ENCODE measurements at regions of chr15 and their contacts with region 1.

Region 1: DNA sequence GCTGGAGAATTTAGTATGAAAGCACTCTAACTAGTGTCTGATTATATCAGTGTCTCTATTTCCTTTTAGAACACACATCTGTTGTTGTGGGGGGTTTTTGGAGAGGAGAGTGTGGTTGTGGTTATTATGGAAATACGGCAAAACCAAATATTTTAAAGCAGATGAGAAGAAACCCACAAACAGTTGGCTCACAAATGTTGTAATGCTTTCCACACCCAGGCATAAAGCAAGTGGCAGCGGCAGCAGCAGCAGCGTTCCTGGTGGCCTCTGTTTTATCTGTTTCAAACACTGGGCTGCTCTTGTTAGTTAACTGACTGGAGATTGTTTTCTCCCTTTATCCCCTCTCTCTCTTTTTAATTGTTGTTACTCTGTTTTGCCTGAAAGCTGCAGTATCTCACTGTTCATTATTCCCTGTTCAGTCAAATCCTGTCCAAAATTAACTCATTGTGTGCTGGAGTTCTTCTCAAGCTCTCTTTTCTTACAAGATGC is 1045.5 kb upstream of the NR2F2 start:
- DNase-seq: peak; percentile 86
- H3K4me3 Mint-ChIP-seq: peak overlapping the region; percentile 50
- H3K27ac Mint-ChIP-seq: peak overlapping the region; percentile 73
- H3K4me1 Mint-ChIP-seq: peaks cover 52% of the 10 kb centered on the region
- H3K27me3 Mint-ChIP-seq: peaks cover 35% of the 10 kb centered on the region

Region 2: GRCh38 chr15:94582369-94582768 is 702.6 kb before region 1 on chr15:
- intact Hi-C with region 1: loop called (anchors 2 kb)
- DNase-seq: peak; percentile 86
- H3K4me3 Mint-ChIP-seq: no peak overlapping the region
- H3K27ac Mint-ChIP-seq: no peak overlapping the region
- H3K4me1 Mint-ChIP-seq: peaks cover 44% of the 10 kb centered on the region
- H3K27me3 Mint-ChIP-seq: peaks cover 75% of the 10 kb centered on the region

Region 3: GRCh38 chr15:95446854-95447253 is 161.9 kb after region 1 on chr15:
- intact Hi-C with region 1: loop called (anchors 1 kb)
- DNase-seq: peak; percentile 84
- H3K4me3 Mint-ChIP-seq: peak overlapping the region; percentile 52
- H3K27ac Mint-ChIP-seq: peak overlapping the region; percentile 48
- H3K4me1 Mint-ChIP-seq: peaks cover 26% of the 10 kb centered on the region
- H3K27me3 Mint-ChIP-seq: peaks cover 8% of the 10 kb centered on the region

Region 4: GRCh38 chr15:95486224-95486623 is 201.2 kb after region 1 on chr15:
- intact Hi-C with region 1: no loop called
- DNase-seq: no peak
- H3K4me3 Mint-ChIP-seq: no peak overlapping the region
- H3K27ac Mint-ChIP-seq: no peak overlapping the region
- H3K4me1 Mint-ChIP-seq: peaks cover 3% of the 10 kb centered on the region
- H3K27me3 Mint-ChIP-seq: peaks cover 2% of the 10 kb centered on the region

Region 5: DNA sequence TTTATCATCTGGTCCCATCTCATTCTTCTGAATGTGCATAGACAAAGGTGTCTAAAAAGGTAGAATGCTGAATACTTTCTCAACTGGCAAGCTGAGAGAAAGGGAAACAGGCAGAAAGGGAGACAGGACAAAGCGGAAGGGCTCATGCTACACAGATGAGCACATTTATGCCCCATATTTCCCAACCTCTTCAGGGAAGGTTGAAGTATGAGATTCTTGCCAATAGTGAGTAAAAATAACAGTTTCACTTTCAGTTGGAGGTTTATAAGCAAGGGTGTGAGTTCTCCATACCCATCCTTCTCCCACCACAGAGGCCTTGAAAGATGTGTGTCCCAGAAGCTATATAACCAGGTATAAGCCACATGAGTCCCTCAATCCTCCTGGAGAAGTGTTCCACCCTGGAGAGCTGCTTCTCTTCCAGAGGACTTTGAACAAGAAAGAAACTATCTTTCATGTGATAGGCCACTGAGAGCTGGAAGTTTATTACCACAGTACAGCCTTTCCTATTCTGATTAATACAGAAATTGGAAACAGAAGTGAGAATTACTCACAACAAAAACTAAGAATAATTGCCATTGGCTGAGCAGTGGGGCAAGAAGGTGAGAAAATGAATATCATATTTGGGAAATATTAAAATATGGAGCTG is 336.1 kb after region 1 on chr15:
- intact Hi-C with region 1: loop called (anchors 5 kb)
- DNase-seq: no peak
- H3K4me3 Mint-ChIP-seq: no peak overlapping the region
- H3K27ac Mint-ChIP-seq: peak overlapping the region; percentile 11
- H3K4me1 Mint-ChIP-seq: peaks cover 5% of the 10 kb centered on the region
- H3K27me3 Mint-ChIP-seq: no peaks in the 10 kb centered on the region

Region 6: GRCh38 chr15:95994418-95994817 is 709.4 kb after region 1 on chr15:
- intact Hi-C with region 1: loop called (anchors 10 kb)
- DNase-seq: no peak
- H3K4me3 Mint-ChIP-seq: no peak overlapping the region
- H3K27ac Mint-ChIP-seq: no peak overlapping the region
- H3K4me1 Mint-ChIP-seq: peaks cover 14% of the 10 kb centered on the region
- H3K27me3 Mint-ChIP-seq: peaks cover 49% of the 10 kb centered on the region

Measured in activated CD4-positive, alpha-beta T cell treated with anti-CD3 and anti-CD28 coated beads, Interleukin-2, amount 10 ng/mL, durations not matched to agents 24 days and 14 days (primary cell).